ENCODE measurements at regions of chr11 and their contacts with region 1.

Region 1: GRCh38 chr11:75142714-75143419 is 8.0 kb upstream of the SLCO2B1 start:
- DNase-seq: peak; percentile 83
- H3K4me3 ChIP-seq: peak overlapping the region; percentile 11
- H3K27ac ChIP-seq: peak overlapping the region; percentile 69
- H3K4me1 ChIP-seq: peaks cover 56% of the 10 kb centered on the region
- CTCF ChIP-seq: no peak

Region 2: GRCh38 chr11:74929431-74930363 is 213.2 kb before region 1 on chr11:
- CTCF ChIA-PET with region 1: interaction called, 9 read pairs
- POLR2A ChIA-PET with region 1: interaction called, 5 read pairs
- intact Hi-C with region 1: loop called (anchors 1 kb)
- DNase-seq: peak; percentile 91
- H3K4me3 ChIP-seq: no peak overlapping the region
- H3K27ac ChIP-seq: no peak overlapping the region
- H3K4me1 ChIP-seq: no peaks in the 10 kb centered on the region
- CTCF ChIP-seq: peak; percentile 99

Region 3: GRCh38 chr11:75022759-75023396 is 120.0 kb before region 1 on chr11:
- CTCF ChIA-PET with region 1: interaction called, 14 read pairs
- POLR2A ChIA-PET with region 1: interaction called, 4 read pairs
- intact Hi-C with region 1: loop called (anchors 1 kb)
- DNase-seq: peak; percentile 80
- H3K4me3 ChIP-seq: no peak overlapping the region
- H3K27ac ChIP-seq: no peak overlapping the region
- H3K4me1 ChIP-seq: no peaks in the 10 kb centered on the region
- CTCF ChIP-seq: peak; percentile 98

Region 4: DNA sequence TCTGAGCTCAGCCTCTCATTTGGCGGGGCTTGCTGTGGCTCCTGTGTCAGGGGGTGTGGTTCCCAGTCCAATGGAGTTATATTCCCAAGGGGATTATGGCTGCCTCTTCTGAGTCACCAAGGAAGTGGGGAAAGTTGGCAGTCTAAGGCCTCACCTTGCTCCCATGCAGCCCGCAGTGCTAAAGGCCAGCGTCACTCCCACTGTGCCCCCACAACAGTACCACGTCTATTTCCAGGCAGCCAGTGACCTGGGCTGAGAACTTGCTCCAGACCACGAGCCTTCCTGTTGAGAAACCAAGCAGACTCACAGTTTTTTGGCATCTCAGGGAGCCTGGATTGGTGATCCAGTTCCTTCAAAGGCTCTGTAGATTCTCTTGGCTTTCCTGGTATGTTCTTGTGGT is 91.8 kb before region 1 on chr11:
- CTCF ChIA-PET with region 1: no interaction called
- POLR2A ChIA-PET with region 1: interaction called, 3 read pairs
- intact Hi-C with region 1: loop called (anchors 5 kb)
- DNase-seq: peak; percentile 16
- H3K4me3 ChIP-seq: no peak overlapping the region
- H3K27ac ChIP-seq: peak overlapping the region; percentile 97
- H3K4me1 ChIP-seq: peaks cover 46% of the 10 kb centered on the region
- CTCF ChIP-seq: no peak

Region 5: DNA sequence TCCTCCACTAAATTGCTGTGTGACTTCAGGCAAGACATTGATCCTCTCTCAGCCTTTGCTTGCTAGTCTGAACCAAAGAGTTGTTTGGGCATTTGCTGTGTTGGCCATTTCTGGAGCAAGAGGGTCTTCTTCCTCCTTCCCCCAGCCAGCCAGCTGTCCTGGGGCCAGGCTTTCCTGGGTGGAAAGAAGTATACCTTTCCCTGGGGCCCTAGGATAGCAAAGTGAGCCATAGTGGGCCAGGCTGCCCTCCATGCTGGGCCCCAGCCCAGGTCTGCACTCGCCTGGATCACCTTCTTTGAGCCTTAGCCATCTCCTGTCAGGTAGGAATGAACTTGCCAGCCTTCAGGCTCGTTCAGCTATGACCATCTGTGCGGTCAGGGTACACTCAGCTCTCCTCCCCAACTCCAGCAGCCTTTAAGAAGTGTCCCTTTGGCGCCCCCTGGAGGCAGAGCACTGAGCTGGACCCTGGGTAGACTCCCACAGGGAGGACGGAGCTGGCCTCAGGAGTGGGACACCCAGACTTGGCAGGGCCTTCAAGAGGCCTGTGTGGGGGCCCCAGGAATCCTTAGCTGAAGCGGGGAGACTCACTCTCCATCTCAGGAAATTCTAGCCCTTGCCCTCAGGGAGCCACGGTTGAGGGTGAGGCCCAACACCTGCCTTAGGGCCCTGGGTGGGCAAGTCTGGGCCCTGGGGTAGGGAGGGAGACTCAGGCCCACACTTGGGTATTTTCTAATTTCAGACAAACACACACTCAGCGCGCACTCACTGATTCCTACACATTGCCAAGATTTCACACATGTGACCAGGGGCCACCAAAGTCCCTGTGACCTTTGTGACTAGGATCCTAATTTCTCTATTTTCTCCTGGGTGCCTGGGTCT is 62.1 kb after region 1 on chr11:
- CTCF ChIA-PET with region 1: interaction called, 27 read pairs
- POLR2A ChIA-PET with region 1: no interaction called
- intact Hi-C with region 1: loop called (anchors 1 kb)
- DNase-seq: peak; percentile 82
- H3K4me3 ChIP-seq: no peak overlapping the region
- H3K27ac ChIP-seq: no peak overlapping the region
- H3K4me1 ChIP-seq: peaks cover 8% of the 10 kb centered on the region
- CTCF ChIP-seq: peak; percentile 95